Mammary epithelial cell (primary cell): ENCODE measurements at regions of chr15 and their contacts with region 1.

Region 1: DNA sequence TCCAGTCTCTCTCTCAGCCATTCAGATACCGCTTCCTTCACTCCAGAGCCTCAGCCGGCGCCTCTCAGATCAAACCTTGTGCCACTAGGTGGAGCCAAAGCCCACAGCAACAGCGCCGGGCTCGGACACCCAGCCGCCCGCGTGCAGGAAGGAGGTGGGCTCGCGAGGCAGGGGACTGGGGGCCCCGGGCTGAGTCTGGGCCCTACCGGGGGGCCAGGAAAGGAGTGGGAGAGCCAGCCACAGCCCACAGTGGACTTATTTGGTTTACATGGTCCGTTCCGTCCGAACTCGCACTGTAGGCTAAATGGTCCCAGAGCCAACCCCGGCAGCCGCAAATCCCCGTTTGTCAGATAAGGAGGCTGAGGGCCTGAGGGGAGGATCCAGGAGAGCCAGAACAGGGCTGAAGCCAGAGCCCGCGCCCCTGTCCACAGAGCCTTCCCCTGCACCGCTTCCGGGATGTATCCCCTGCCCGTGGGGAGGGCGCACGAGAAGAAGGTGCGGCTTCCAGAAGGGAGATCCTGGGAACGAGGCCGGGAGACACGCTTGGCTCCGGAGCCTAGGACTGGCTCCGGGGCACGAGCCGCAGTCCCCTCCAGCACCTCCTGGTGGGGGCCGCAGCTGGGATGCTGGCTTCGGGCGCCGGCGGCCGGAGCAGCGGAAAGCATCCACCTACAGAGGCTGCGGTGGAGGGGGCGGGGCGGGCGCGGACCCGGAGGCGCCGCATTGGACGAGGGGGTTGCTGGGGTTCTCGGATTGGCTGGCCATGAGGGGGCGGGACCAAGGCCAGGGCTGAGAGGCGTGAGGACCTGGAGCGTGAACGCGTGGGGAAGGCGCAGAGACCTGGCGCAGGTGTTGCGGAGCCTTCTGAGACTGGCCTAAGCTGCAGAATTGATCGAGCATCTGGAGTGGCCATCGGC is 6.5 kb upstream of the CYP11A1 start:
- DNase-seq: peak; percentile 91
- H3K4me3 ChIP-seq: peak overlapping the region; percentile 58 to 79 (median 68)
- H3K27ac ChIP-seq: no peak overlapping the region
- H3K4me1 ChIP-seq: peaks cover 20% of the 10 kb centered on the region
- H3K27me3 ChIP-seq: no peaks in the 10 kb centered on the region
- CTCF ChIP-seq: peak; percentile 80 to 89

Region 2: GRCh38 chr15:74322181-74323076 is 51.6 kb before region 1 on chr15:
- CTCF ChIA-PET with region 1: no interaction called
- dilution Hi-C with region 1: no loop called
- in situ Hi-C with region 1: no loop called
- intact Hi-C with region 1: no loop called
- DNase-seq: peak; percentile 32
- H3K4me3 ChIP-seq: no peak overlapping the region
- H3K27ac ChIP-seq: no peak overlapping the region
- H3K4me1 ChIP-seq: no peaks in the 10 kb centered on the region
- H3K27me3 ChIP-seq: no peaks in the 10 kb centered on the region
- CTCF ChIP-seq: peak; percentile 87 to 97

Region 3: DNA sequence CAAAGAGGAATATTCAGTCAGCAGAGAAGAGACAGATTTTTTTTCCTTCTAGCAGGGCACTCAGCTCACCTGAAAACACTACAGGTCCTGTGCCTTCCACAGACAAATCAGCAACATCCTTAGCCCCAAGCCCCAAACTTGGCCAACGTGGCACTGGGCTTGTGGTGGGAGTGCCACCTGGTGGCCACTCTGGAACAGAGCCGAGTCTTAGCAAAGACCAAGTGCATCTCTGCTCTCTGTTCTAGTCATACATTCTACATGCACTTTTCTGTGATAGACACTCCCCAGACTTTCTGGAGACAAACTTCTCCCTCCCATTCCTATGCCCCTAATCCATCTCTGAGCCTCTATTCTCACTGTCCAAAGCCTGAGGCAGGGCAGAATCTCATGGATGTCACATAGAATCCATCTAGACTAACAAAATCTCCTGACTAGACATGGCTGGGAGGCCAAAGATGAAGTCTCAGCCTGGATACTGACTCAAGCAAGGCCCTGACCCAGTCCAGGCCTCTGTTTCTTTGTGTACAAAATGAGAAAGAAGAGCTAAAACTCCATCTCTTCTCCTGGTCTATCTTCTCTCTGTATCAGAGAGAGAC is 64.8 kb after region 1 on chr15:
- CTCF ChIA-PET with region 1: no interaction called
- dilution Hi-C with region 1: loop called (anchors 10 kb)
- in situ Hi-C with region 1: no loop called
- intact Hi-C with region 1: loop called (anchors 2 kb)
- DNase-seq: peak; percentile 73
- H3K4me3 ChIP-seq: no peak overlapping the region
- H3K27ac ChIP-seq: no peak overlapping the region
- H3K4me1 ChIP-seq: peaks cover 4% of the 10 kb centered on the region
- H3K27me3 ChIP-seq: no peaks in the 10 kb centered on the region
- CTCF ChIP-seq: peak; percentile 97 to 98

Region 4: DNA sequence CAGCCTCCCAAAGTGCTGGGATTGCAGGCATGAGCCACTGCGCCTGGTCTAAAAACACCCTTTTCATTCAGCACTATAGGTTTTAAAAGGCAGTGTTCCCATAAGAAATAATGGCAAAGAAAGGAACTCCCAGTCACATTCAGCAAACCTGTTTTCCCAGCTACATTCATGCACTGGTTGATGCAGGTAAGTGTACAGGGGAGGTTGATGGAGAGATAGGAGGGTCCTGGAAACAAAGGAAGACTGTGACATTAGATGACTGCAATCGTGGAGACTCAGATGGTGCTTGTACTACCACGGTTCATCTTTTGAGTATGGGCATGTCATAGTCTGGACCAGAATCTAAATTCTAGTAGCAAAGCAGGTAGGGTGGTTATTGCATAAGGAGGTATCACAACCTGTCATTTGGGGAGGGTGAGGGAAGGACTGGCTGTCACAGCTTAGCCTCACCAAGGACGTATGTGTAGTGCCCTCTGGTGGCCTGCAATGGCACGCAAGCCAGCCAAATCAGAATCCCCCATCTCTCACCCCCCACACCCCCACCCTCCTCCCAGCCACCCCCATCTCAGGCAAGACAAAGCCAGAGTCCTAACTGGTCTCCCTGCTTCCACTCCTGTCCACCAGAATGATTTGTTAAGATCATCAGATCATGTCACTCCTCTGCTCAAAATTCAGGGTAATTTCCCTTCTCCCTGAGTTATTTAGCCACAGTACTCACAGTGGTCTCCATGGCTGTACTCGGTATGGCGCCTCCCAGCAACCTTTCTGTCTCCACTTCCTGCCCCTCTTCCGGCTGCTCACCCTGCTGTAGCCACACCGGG is 115.7 kb after region 1 on chr15:
- CTCF ChIA-PET with region 1: no interaction called
- dilution Hi-C with region 1: no loop called
- in situ Hi-C with region 1: no loop called
- intact Hi-C with region 1: loop called (anchors 1 kb)
- DNase-seq: peak; percentile 20
- H3K4me3 ChIP-seq: no peak overlapping the region
- H3K27ac ChIP-seq: no peak overlapping the region
- H3K4me1 ChIP-seq: no peaks in the 10 kb centered on the region
- H3K27me3 ChIP-seq: no peaks in the 10 kb centered on the region
- CTCF ChIP-seq: peak; percentile 50 to 72

Region 5: GRCh38 chr15:74545880-74546656 is 172.1 kb after region 1 on chr15:
- CTCF ChIA-PET with region 1: no interaction called
- dilution Hi-C with region 1: no loop called
- in situ Hi-C with region 1: loop called in 1 of 2 experiments (anchors 10 kb)
- intact Hi-C with region 1: loop called (anchors 2 kb)
- DNase-seq: peak; percentile 99
- H3K4me3 ChIP-seq: no peak overlapping the region
- H3K27ac ChIP-seq: no peak overlapping the region
- H3K4me1 ChIP-seq: peaks cover 30% of the 10 kb centered on the region
- H3K27me3 ChIP-seq: no peaks in the 10 kb centered on the region
- CTCF ChIP-seq: peak in 1 of 2 donors; percentile 35

Region 6: GRCh38 chr15:74635228-74635627 is 261.2 kb after region 1 on chr15:
- CTCF ChIA-PET with region 1: no interaction called
- dilution Hi-C with region 1: loop called (anchors 5 kb)
- in situ Hi-C with region 1: no loop called
- intact Hi-C with region 1: loop called (anchors 1 kb)
- DNase-seq: peak; percentile 55
- H3K4me3 ChIP-seq: no peak overlapping the region
- H3K27ac ChIP-seq: no peak overlapping the region
- H3K4me1 ChIP-seq: no peaks in the 10 kb centered on the region
- H3K27me3 ChIP-seq: no peaks in the 10 kb centered on the region
- CTCF ChIP-seq: peak; percentile 88 to 96

Region 7: GRCh38 chr15:75201609-75202250 is 827.7 kb after region 1 on chr15 and contains the start of gene C15orf39:
- CTCF ChIA-PET with region 1: no interaction called
- dilution Hi-C with region 1: no loop called
- in situ Hi-C with region 1: no loop called
- intact Hi-C with region 1: loop called (anchors 5 kb)
- DNase-seq: peak; percentile 67
- H3K4me3 ChIP-seq: peak within 1 kb of the TSS; percentile 78 to 95 (median 87)
- H3K27ac ChIP-seq: peak within 1 kb of the TSS; percentile 89
- H3K4me1 ChIP-seq: peaks cover 33% of the 10 kb centered on the region
- H3K27me3 ChIP-seq: no peaks in the 10 kb centered on the region
- CTCF ChIP-seq: peak; percentile 40 to 62
- total RNA-seq, gene C15orf39: 3.8 to 22.8 TPM